AG04449 (cell line): ENCODE measurements at regions of chr11 and their contacts with region 1.

Region 1: GRCh38 chr11:112219476-112220232 is 6.6 kb upstream of the PTS start:
- DNase-seq: no peak
- H3K4me3 ChIP-seq: no peak overlapping the region
- CTCF ChIP-seq: peak; percentile 50

Region 2: DNA sequence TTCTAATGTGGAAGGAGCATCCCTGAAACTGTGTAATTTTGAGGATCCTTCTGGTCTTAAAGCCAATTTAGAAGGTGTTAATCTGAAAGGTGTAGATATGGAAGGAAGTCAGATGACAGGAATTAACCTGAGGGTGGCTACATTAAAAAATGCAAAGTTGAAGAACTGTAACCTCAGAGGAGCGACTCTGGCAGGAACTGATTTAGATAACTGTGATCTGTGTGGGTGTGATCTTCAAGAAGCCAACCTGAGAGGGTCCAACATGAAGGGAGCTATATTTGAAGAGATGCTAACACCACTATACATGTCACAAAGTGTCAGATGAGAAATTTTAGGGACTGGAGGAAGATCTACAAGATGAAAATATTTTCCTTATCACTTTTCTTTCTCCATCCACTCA is 36.8 kb before region 1 on chr11:
- CTCF ChIA-PET with region 1: no interaction called
- POLR2A ChIA-PET with region 1: no interaction called
- DNase-seq: no peak
- H3K4me3 ChIP-seq: no peak overlapping the region
- CTCF ChIP-seq: no peak

Region 3: GRCh38 chr11:112229746-112230433 is 10.2 kb after region 1 on chr11:
- CTCF ChIA-PET with region 1: interaction called, 10 read pairs
- POLR2A ChIA-PET with region 1: no interaction called
- DNase-seq: peak; percentile 90
- H3K4me3 ChIP-seq: no peak overlapping the region
- CTCF ChIP-seq: no peak

Region 4: DNA sequence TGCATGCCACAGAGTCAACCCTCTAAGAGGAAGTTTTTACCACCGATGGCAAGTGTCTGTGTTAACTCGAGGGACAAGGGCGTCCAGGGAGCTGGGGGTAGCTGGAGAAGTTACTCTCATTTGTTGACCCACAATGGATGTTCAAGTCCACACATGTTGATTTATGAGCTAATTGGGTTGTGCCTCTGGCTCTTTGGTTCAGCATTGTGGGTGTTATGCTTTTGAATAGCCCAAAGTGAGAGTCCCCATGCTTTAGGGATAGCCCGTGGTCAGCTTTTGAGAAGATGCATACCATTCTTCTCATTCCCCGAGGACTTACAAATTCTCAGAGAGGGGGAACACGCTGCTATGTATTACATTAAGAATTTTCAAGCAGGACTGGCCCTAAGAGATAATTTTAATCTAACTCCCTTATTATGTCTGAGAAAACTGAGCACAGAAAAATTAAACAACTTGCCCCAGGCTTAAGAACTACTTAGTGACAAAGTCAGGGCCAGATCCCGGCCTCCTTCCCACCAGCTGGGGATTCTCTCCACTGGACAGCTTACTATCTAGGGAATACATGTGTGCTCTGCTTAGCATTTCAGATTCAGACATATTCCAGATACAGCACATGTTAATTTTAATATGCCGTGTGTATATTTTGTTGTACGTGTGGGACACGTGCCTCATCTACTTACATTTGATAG is 46.2 kb after region 1 on chr11:
- CTCF ChIA-PET with region 1: interaction called, 970 read pairs
- POLR2A ChIA-PET with region 1: no interaction called
- DNase-seq: peak; percentile 42
- H3K4me3 ChIP-seq: no peak overlapping the region
- CTCF ChIP-seq: no peak

Region 5: GRCh38 chr11:113289431-113290187 is 1070.0 kb after region 1 on chr11:
- CTCF ChIA-PET with region 1: interaction called, 21 read pairs
- POLR2A ChIA-PET with region 1: no interaction called
- DNase-seq: no peak
- H3K4me3 ChIP-seq: no peak overlapping the region
- CTCF ChIP-seq: peak; percentile 94